Esophagus squamous epithelium (tissue), 5 donors: ENCODE measurements at regions of chr1 and their contacts with region 1.

Region 1: DNA sequence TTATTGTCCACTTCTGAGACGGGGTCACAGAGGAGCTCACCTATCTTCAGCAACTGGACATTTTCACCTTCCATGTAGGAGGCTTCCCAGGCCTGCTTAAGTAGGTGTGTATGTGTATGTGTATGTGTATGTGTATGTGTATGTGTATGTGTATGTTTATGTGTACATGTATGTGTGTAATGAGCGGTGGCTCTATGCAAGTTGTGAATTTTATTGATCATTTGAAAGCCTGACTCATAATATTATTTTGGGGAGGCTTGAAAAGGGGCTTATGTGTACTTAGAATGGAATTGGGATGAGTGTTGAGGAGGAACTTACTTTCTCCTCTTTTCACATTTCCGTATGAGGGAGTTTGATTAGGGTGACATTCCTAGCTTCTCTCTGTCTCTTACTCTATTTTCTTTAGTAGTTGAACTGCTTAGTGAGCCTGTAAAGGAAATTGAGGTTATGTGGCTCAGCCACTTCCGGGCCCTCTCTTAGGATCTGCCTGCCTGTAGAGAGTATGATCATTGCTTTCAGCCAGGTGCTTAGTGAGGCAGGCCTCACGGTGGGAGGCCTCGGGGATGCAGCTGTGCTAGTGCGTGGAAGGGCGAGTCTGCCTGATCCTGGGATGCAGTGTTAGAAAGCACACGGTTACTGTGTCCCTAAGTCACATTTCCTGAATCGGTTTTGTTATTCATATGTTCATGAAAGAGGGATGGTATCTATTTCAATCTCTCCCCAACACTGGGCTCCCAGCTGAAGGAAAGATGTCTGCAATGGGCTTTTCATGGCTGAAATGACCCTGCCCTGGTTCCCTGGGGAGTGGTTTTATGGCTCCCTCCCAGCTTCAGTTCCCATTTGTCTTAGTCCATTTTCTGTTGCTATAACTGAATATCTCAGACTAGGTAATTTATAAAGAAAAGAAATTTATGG is 61.1 kb downstream of the IER5 start:
- DNase-seq: no peak
- H3K4me3 ChIP-seq: no peak overlapping the region
- H3K27ac ChIP-seq: peak overlapping the region in 3 of 4 donors; percentile 2 to 21 (median 18)
- H3K4me1 ChIP-seq: peaks cover 0 to 53% (median 29%) of the 10 kb centered on the region in 3 donors
- H3K27me3 ChIP-seq: no peaks in the 10 kb centered on the region
- CTCF ChIP-seq: no peak
- POLR2A ChIP-seq: no peak

Region 2: GRCh38 chr1:180881806-180882509 is 267.6 kb before region 1 on chr1:
- intact Hi-C with region 1: loop called (anchors 5 kb)
- DNase-seq: no peak
- H3K4me3 ChIP-seq: no peak overlapping the region
- H3K27ac ChIP-seq: no peak overlapping the region
- H3K4me1 ChIP-seq: no peaks in the 10 kb centered on the region
- H3K27me3 ChIP-seq: no peaks in the 10 kb centered on the region
- CTCF ChIP-seq: peak in 5 of 6 experiments; percentile 25 to 60 (median 32)
- POLR2A ChIP-seq: no peak